AG04450 (cell line): ENCODE measurements at regions of chr2 and their contacts with region 1.

Region 1: DNA sequence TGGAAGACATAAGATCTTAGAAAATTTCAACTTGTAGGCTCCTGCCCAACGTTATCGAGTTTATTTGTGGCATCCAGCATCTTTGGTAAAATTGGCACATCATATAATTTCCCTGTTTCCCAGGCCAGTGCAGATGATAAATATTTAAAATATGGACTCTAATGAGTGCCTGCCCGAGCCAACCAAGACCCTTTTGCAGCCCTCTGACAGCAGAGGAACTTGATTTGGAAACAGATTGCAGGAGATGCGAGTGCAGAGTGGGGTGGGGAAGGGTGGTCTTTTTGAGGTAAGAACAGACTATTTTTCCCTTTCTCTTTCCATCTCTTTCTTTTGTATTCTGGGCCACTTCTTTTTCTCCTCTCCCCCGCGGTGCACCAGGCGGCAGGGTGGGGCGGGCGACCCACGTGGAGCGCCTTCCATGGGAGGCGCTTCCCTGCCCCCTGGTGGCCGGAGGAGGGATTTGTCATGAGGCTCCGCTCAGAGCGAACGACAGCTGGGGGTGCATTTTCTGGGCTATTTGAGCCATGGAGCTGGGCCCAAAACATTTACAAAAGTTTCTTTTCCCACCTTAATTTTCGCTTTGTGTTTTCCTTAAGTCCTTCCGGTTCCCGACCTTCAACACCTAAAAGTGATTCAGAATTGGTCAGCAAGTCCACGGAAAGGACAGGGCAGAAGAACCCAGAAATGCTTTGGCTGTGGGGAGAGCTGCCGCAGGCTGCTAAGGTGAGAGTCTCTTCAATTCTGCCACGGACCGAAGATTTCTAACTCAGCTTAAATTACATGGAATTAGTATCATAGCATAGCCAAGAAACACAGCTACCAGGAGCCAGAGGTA is 32.7 kb downstream of the LPIN1 start:
- DNase-seq: no peak
- H3K4me3 ChIP-seq: no peak overlapping the region
- H3K27ac ChIP-seq: no peak overlapping the region
- H3K27me3 ChIP-seq: no peaks in the 10 kb centered on the region
- CTCF ChIP-seq: peak; percentile 95

Region 2: GRCh38 chr2:11681722-11682589 is 97.2 kb before region 1 on chr2:
- CTCF ChIA-PET with region 1: interaction called, 204 read pairs
- POLR2A ChIA-PET with region 1: no interaction called
- DNase-seq: no peak
- H3K4me3 ChIP-seq: no peak overlapping the region
- H3K27ac ChIP-seq: no peak overlapping the region
- H3K27me3 ChIP-seq: peaks cover 44% of the 10 kb centered on the region
- CTCF ChIP-seq: peak; percentile 83

Region 3: DNA sequence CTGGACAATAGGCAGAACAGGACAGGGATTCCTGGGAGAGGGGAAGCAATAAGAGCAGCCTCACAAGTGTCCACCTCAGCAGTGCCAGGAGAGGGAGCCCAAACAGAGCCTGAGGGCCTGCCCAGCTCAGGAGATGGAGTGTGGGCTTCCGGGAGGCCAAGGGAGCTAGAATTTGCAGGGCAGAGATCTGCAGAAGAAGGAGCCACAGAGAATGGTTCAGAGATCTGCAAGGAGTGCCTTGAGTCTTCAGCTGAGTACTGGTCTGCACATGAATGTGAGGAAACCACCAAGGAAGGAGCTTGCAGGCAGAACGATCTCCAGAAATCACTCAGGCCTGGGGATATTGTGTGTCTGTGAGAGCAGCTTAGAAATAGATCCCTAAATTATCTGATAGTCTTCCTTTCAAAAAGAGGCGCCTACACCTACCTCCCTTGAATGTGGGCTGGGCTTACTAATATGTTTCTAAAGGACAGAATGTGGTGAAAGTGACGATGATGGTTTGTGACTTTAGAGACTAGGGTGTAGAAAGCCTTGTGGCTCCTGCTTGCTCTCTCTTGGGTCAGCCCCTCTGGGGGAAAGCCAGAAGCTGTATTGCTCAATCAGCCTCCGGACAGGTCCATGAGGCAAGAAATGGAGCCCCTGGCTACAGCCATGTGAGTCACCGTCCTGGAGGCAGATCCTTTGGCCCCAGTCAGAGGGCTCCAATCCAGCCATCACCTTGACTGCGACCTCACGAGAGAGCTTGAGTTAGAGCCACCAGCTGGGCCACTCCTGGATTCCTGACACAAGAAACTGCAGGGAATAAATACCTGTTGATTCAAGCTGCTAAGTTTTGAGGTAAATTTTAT is 40.3 kb before region 1 on chr2:
- CTCF ChIA-PET with region 1: interaction called, 26 read pairs
- POLR2A ChIA-PET with region 1: no interaction called
- DNase-seq: peak; percentile 53
- H3K4me3 ChIP-seq: no peak overlapping the region
- H3K27ac ChIP-seq: peak overlapping the region; percentile 48
- H3K27me3 ChIP-seq: peaks cover 4% of the 10 kb centered on the region
- CTCF ChIP-seq: peak; percentile 66

Region 4: GRCh38 chr2:11757101-11757500 is 22.0 kb before region 1 on chr2:
- CTCF ChIA-PET with region 1: interaction called, 11 read pairs
- POLR2A ChIA-PET with region 1: no interaction called
- DNase-seq: no peak
- H3K4me3 ChIP-seq: no peak overlapping the region
- H3K27ac ChIP-seq: no peak overlapping the region
- H3K27me3 ChIP-seq: no peaks in the 10 kb centered on the region
- CTCF ChIP-seq: no peak

Region 5: GRCh38 chr2:11873356-11874154 is 94.4 kb after region 1 on chr2:
- CTCF ChIA-PET with region 1: no interaction called
- POLR2A ChIA-PET with region 1: no interaction called
- DNase-seq: peak; percentile 13
- H3K4me3 ChIP-seq: no peak overlapping the region
- H3K27ac ChIP-seq: no peak overlapping the region
- H3K27me3 ChIP-seq: peaks cover 5% of the 10 kb centered on the region
- CTCF ChIP-seq: no peak